OCI-LY7 (cell line): ENCODE measurements at regions of chr5 and their contacts with region 1.

Region 1: GRCh38 chr5:143599474-143599873 is 196.0 kb upstream of the NR3C1 start:
- DNase-seq: no peak
- H3K4me3 ChIP-seq: no peak overlapping the region
- H3K27ac ChIP-seq: no peak overlapping the region
- H3K4me1 ChIP-seq: peaks cover 21% of the 10 kb centered on the region
- CTCF ChIP-seq: no peak

Region 2: DNA sequence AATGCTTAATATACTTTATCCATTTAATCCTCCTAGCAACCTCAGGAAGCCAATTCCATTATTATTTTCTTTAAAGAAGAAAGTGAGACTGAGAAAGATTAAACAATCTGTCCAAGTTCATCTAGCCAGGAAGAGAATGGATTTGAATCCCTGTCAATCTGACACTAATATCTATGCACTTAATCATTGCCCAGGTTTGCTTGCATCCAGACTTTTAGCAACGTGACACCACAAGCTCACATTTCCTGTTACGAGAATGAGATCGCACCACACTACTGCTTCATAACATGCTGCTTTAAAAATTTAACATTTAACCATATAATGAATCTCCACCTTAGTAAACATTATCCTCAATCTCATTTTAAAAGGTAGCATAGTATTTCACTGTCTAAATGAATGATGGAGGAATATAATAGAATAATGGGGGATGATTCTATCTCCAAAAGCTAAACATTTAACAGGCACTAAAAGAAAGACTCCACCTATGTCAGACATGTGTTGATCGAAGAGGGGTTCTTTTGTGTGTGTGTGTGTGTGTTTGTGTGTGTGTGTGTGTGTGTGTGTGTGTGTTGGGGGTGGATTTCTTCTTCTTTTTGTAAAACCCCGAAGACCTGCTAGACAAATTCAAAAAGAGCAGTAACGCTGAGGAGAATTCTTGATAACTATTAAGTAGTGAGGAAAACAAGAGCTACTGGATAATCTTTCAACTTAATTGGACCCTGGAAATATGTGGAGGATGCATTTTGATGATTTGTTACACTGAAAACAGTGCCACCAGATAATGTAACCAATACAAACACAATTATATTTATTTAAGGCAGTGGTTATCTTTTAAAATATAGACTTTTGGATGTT is 57.3 kb before region 1 on chr5:
- CTCF ChIA-PET with region 1: no interaction called
- POLR2A ChIA-PET with region 1: no interaction called
- intact Hi-C with region 1: no loop called
- DNase-seq: no peak
- H3K4me3 ChIP-seq: no peak overlapping the region
- H3K27ac ChIP-seq: no peak overlapping the region
- H3K4me1 ChIP-seq: no peaks in the 10 kb centered on the region
- CTCF ChIP-seq: no peak

Region 3: GRCh38 chr5:143582869-143583268 is 16.6 kb before region 1 on chr5:
- CTCF ChIA-PET with region 1: no interaction called
- POLR2A ChIA-PET with region 1: interaction called, 53 read pairs
- intact Hi-C with region 1: no loop called
- DNase-seq: peak; percentile 71
- H3K4me3 ChIP-seq: peak overlapping the region; percentile 7
- H3K27ac ChIP-seq: peak overlapping the region; percentile 64
- H3K4me1 ChIP-seq: peaks cover 43% of the 10 kb centered on the region
- CTCF ChIP-seq: no peak

Region 4: GRCh38 chr5:143886651-143887638 is 287.5 kb after region 1 on chr5:
- CTCF ChIA-PET with region 1: no interaction called
- POLR2A ChIA-PET with region 1: no interaction called
- intact Hi-C with region 1: no loop called
- DNase-seq: no peak
- H3K4me3 ChIP-seq: no peak overlapping the region
- H3K27ac ChIP-seq: no peak overlapping the region
- H3K4me1 ChIP-seq: no peaks in the 10 kb centered on the region
- CTCF ChIP-seq: no peak